Astrocyte of the cerebellum (primary cell): ENCODE measurements at regions of chr10 and their contacts with region 1.

Region 1: DNA sequence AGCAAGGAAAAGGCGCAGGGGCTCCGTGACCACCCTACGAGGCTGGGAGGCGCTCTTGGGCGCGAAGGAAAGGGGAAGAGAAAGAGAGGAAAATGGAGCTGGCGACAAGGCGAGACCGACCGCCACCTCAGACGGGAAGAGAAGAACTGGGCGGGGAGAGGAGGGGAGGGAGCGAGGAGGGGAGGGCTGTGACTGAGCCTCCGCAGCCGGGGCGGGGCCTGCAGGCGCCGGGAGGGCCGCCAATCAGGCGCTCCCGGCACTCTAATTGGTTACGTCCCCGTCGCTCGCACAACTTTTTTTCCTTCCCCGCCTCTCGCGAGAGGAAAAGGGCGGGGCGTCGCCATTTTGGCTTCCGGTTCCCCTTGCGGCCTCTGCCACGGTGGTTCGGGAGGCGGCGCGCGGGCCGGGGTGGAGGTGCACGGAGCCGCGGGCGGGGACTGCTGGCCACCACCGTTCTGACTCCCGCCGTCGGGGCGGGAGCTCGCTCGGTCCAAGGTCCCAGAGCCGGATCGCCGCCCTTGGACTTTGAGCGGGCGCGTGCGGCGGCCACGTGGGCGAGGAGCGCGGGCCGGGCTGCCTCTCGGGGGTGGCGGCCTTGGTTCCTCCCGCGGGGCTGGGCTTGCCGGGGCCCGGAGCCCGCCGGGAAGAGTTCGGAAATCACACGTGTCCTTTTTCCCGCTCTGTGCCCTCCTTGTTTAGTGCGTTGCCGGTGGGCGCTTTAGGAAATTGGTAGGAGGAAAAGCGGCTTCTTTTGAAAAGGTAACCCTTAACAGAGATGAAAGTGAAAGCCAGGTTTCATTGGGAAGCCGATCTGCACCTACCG is at the start of gene GDI2:
- DNase-seq: peak; percentile 87
- H3K4me3 ChIP-seq: peak within 1 kb of the TSS; percentile 90
- CTCF ChIP-seq: no peak

Region 2: DNA sequence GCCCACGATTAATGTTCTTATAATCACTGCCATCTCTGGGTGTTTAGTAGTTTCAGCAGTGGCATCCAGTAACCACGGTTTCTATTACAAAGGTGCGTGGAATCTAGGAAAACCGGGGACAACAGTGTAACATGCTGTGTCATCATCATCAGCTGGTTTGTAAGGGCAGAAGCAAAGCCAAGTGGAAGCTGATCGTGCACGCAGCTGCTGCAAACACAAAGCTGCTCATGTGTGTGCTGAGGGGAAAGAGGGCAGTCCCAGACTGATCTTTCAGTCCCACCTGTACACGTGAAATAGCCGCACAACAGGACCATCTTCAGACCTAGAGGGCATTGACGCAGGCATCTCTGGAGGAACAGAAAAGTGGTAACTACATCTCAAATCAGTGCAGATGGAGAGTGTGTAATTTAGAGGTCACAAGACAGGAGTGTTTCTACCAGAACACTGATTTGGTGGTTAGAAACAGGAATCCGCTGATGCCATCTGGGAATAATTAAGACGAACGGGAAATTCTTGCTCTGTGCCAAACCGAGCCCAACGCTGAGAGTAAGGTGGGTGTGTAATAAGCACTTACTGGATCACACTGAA is 62.8 kb after region 1 on chr10:
- in situ Hi-C with region 1: loop called (anchors 5 kb)
- DNase-seq: peak; percentile 71
- H3K4me3 ChIP-seq: no peak overlapping the region
- CTCF ChIP-seq: no peak